CD4-positive, alpha-beta memory T cell (primary cell): ENCODE measurements at regions of chr13 and their contacts with region 1.

Region 1: DNA sequence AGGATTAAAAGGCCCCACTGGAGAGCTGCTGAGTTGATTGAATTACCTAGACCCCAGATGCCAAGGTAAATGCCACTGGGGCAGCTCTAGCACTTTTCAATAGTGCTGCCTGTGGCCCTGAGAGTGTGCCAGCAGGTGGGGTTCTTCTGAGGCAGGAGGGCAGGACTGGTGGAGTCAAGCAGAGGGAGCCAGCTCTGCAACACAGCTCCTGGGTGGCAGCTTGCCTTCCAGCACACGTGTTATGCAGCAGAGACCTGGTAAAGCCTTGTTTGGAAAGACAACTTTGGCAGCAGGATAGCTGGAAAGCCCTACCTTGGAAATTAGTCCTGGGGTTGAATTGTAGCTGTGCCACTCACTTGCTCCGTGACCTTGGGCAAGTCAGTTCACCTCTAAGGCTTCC is 306.6 kb downstream of the ATP8A2 start:
- DNase-seq: peak in 1 of 5 donors; percentile 2
- H3K4me3 ChIP-seq: no peak overlapping the region
- H3K4me3 Mint-ChIP-seq: no peak overlapping the region
- H3K27ac ChIP-seq: no peak overlapping the region
- H3K27ac Mint-ChIP-seq: no peak overlapping the region
- H3K4me1 ChIP-seq: no peaks in the 10 kb centered on the region
- H3K4me1 Mint-ChIP-seq: no peaks in the 10 kb centered on the region
- H3K27me3 ChIP-seq: no peaks in the 10 kb centered on the region
- H3K27me3 Mint-ChIP-seq: peaks cover 3 to 6% of the 10 kb centered on the region in 2 donors

Region 2: GRCh38 chr13:26062844-26063444 is 384.5 kb after region 1 on chr13:
- CTCF ChIA-PET with region 1: interaction called, 3 read pairs
- POLR2A ChIA-PET with region 1: no interaction called
- intact Hi-C with region 1: loop called (anchors 2 kb)
- DNase-seq: peak; percentile 39 to 55 (median 52)
- H3K4me3 ChIP-seq: no peak overlapping the region
- H3K4me3 Mint-ChIP-seq: no peak overlapping the region
- H3K27ac ChIP-seq: no peak overlapping the region
- H3K27ac Mint-ChIP-seq: peak overlapping the region in 1 of 7 donors; percentile 69
- H3K4me1 ChIP-seq: no peaks in the 10 kb centered on the region
- H3K4me1 Mint-ChIP-seq: peaks cover 0 to 1% (median 0%) of the 10 kb centered on the region in 4 donors
- H3K27me3 ChIP-seq: no peaks in the 10 kb centered on the region
- H3K27me3 Mint-ChIP-seq: peaks cover 0 to 12% of the 10 kb centered on the region in 2 donors